ENCODE measurements at regions of chr1 and their contacts with region 1.

Region 1: GRCh38 chr1:218665221-218665620 is 320.1 kb downstream of the TGFB2 start:
- DNase-seq: no peak
- H3K4me3 ChIP-seq: no peak overlapping the region
- H3K27ac ChIP-seq: peak overlapping the region; percentile 56
- H3K4me1 ChIP-seq: peaks cover 16% of the 10 kb centered on the region
- H3K27me3 ChIP-seq: no peaks in the 10 kb centered on the region
- CTCF ChIP-seq: no peak
- POLR2A ChIP-seq: no peak

Region 2: DNA sequence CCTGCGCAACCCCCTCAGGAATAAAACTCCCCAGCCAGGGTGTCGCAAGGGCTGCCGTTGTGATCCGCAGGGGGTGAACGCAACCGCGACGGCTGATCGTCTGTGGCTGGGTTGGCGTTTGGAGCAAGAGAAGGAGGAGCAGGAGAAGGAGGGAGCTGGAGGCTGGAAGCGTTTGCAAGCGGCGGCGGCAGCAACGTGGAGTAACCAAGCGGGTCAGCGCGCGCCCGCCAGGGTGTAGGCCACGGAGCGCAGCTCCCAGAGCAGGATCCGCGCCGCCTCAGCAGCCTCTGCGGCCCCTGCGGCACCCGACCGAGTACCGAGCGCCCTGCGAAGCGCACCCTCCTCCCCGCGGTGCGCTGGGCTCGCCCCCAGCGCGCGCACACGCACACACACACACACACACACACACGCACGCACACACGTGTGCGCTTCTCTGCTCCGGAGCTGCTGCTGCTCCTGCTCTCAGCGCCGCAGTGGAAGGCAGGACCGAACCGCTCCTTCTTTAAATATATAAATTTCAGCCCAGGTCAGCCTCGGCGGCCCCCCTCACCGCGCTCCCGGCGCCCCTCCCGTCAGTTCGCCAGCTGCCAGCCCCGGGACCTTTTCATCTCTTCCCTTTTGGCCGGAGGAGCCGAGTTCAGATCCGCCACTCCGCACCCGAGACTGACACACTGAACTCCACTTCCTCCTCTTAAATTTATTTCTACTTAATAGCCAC is 319.4 kb before region 1 on chr1:
- intact Hi-C with region 1: loop called (anchors 10 kb)
- DNase-seq: no peak
- H3K4me3 ChIP-seq: peak overlapping the region; percentile 68 to 76
- H3K27ac ChIP-seq: peak overlapping the region; percentile 86
- H3K4me1 ChIP-seq: peaks cover 8% of the 10 kb centered on the region
- H3K27me3 ChIP-seq: no peaks in the 10 kb centered on the region
- CTCF ChIP-seq: no peak
- POLR2A ChIP-seq: peak in 1 of 2 donors; percentile 28

Region 3: GRCh38 chr1:220164116-220164515 is 1498.9 kb after region 1 on chr1:
- intact Hi-C with region 1: loop called (anchors 5 kb)
- DNase-seq: no peak
- H3K4me3 ChIP-seq: no peak overlapping the region
- H3K27ac ChIP-seq: no peak overlapping the region
- H3K4me1 ChIP-seq: no peaks in the 10 kb centered on the region
- H3K27me3 ChIP-seq: no peaks in the 10 kb centered on the region
- CTCF ChIP-seq: no peak
- POLR2A ChIP-seq: no peak

Measured in vagina (tissue), 2 donors.